ENCODE measurements at regions of chr17 and their contacts with region 1.

Region 1: DNA sequence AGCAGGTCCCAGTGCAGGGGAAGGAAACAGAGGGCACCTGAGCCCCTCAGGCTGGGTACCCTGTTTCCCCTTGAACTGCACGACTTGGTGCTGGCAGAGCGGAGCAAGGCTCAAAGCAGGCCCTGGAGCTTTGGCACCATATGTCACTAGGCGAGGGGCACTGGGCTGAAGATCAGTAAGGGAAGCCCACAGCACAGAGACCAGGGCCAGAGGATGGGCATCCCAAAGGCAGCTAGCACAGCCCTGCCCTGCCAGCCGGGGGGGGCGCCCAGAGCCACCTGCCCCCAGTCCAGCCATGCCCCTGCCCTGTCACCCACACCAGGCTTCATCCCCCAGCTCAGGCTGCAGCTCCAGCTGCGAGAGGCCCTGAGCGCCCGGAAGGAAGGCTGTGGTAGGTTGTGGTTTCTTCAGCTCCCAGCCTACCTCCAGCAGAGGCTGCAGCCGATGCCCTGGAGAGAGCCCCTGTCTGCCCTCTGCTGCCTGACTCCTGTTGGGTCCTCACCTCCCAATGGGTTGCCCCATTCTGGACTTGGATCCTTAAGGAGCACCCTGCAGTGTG is 10.9 kb downstream of the NHERF1 start:
- DNase-seq: peak; percentile 37 to 83 (median 52)
- ATAC-seq: peak; percentile 82
- H3K4me3 ChIP-seq: peak overlapping the region; percentile 35
- H3K4me3 Mint-ChIP-seq: peak overlapping the region; percentile 88
- H3K27ac ChIP-seq: peak overlapping the region; percentile 61 to 63
- H3K27ac Mint-ChIP-seq: peak overlapping the region; percentile 91
- H3K4me1 ChIP-seq: peaks cover 100% of the 10 kb centered on the region
- H3K4me1 Mint-ChIP-seq: peaks cover 70% of the 10 kb centered on the region
- H3K27me3 ChIP-seq: no peaks in the 10 kb centered on the region
- H3K27me3 Mint-ChIP-seq: no peaks in the 10 kb centered on the region
- CTCF ChIP-seq: peak; percentile 38

Region 2: DNA sequence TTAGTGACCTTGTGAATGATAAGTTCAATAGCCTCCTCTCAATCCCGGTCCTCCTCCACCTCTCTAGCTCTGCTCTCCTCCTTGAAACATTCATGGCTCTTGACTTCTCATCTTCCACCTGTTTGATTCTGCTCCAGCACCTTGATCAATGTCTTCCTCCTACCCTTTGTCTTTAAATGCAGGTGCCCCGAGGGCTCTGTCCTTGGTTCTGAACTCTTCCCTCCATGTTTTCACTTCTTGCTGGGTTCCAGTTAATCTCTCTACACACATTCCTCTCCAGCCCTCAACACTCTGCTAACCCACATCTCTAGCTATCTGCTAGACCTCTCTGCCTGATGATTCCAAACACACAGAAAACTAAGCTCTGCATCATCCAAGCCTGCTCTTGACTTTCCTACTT is 149.2 kb before region 1 on chr17:
- CTCF ChIA-PET with region 1: no interaction called
- POLR2A ChIA-PET with region 1: no interaction called
- intact Hi-C with region 1: no loop called
- DNase-seq: no peak
- ATAC-seq: no peak
- H3K4me3 ChIP-seq: no peak overlapping the region
- H3K4me3 Mint-ChIP-seq: no peak overlapping the region
- H3K27ac ChIP-seq: no peak overlapping the region
- H3K27ac Mint-ChIP-seq: no peak overlapping the region
- H3K4me1 ChIP-seq: peaks cover 8% of the 10 kb centered on the region
- H3K4me1 Mint-ChIP-seq: no peaks in the 10 kb centered on the region
- H3K27me3 ChIP-seq: peaks cover 15 to 24% of the 10 kb centered on the region in 2 experiments
- H3K27me3 Mint-ChIP-seq: peaks cover 13% of the 10 kb centered on the region
- CTCF ChIP-seq: no peak

Region 3: DNA sequence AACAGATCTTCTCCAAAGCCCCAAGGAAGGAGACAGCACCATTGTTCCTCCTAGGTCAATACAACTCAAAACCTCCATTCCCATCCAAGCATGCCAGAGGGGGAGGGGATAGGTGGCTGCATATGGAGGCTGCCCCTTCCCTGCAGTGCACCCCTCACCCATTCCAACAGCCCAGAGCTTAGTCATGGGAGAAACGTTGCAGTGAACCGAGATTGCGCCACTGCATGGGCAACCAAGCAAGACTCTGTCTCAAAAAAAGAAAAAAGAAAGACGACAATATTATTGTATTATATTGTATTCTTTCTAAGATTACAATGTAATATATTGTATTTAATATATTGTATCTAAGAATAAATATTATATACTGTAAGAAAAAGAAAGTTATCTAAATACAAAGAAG is 99.4 kb before region 1 on chr17:
- CTCF ChIA-PET with region 1: interaction called, 5 read pairs
- POLR2A ChIA-PET with region 1: interaction called, 12 read pairs
- intact Hi-C with region 1: no loop called
- DNase-seq: no peak
- ATAC-seq: no peak
- H3K4me3 ChIP-seq: no peak overlapping the region
- H3K4me3 Mint-ChIP-seq: no peak overlapping the region
- H3K27ac ChIP-seq: no peak overlapping the region
- H3K27ac Mint-ChIP-seq: no peak overlapping the region
- H3K4me1 ChIP-seq: peaks cover 6% of the 10 kb centered on the region
- H3K4me1 Mint-ChIP-seq: peaks cover 5% of the 10 kb centered on the region
- H3K27me3 ChIP-seq: peaks cover 5 to 12% of the 10 kb centered on the region in 2 experiments
- H3K27me3 Mint-ChIP-seq: peaks cover 52% of the 10 kb centered on the region
- CTCF ChIP-seq: no peak

Region 4: GRCh38 chr17:74742153-74742515 is 17.2 kb before region 1 on chr17:
- CTCF ChIA-PET with region 1: interaction called, 23 read pairs
- POLR2A ChIA-PET with region 1: interaction called, 90 read pairs
- intact Hi-C with region 1: no loop called
- DNase-seq: peak in 11 of 14 experiments; percentile 32 to 81 (median 62)
- ATAC-seq: peak; percentile 5
- H3K4me3 ChIP-seq: peak overlapping the region; percentile 32
- H3K4me3 Mint-ChIP-seq: peak overlapping the region; percentile 82
- H3K27ac ChIP-seq: peak overlapping the region; percentile 58 to 65
- H3K27ac Mint-ChIP-seq: peak overlapping the region; percentile 91
- H3K4me1 ChIP-seq: peaks cover 100% of the 10 kb centered on the region
- H3K4me1 Mint-ChIP-seq: peaks cover 86% of the 10 kb centered on the region
- H3K27me3 ChIP-seq: no peaks in the 10 kb centered on the region
- H3K27me3 Mint-ChIP-seq: no peaks in the 10 kb centered on the region
- CTCF ChIP-seq: no peak

Region 5: GRCh38 chr17:74748529-74749365 is 10.6 kb before region 1 on chr17 and contains the start of gene NHERF1:
- CTCF ChIA-PET with region 1: interaction called, 23 read pairs
- POLR2A ChIA-PET with region 1: interaction called, 90 read pairs
- intact Hi-C with region 1: loop called in 1 of 2 experiments (anchors 1 kb)
- DNase-seq: peak in 13 of 14 experiments; percentile 83 to 97 (median 94)
- ATAC-seq: peak; percentile 82
- H3K4me3 ChIP-seq: peak within 1 kb of the TSS; percentile 98
- H3K4me3 Mint-ChIP-seq: peak within 1 kb of the TSS; percentile 92
- H3K27ac ChIP-seq: peak within 1 kb of the TSS; percentile 48 to 84
- H3K27ac Mint-ChIP-seq: peak within 1 kb of the TSS; percentile 94
- H3K4me1 ChIP-seq: peaks cover 74% of the 10 kb centered on the region
- H3K4me1 Mint-ChIP-seq: peaks cover 74% of the 10 kb centered on the region
- H3K27me3 ChIP-seq: no peaks in the 10 kb centered on the region
- H3K27me3 Mint-ChIP-seq: no peaks in the 10 kb centered on the region
- CTCF ChIP-seq: no peak
- total RNA-seq, gene NHERF1: 68.4 to 72.4 TPM

Region 6: DNA sequence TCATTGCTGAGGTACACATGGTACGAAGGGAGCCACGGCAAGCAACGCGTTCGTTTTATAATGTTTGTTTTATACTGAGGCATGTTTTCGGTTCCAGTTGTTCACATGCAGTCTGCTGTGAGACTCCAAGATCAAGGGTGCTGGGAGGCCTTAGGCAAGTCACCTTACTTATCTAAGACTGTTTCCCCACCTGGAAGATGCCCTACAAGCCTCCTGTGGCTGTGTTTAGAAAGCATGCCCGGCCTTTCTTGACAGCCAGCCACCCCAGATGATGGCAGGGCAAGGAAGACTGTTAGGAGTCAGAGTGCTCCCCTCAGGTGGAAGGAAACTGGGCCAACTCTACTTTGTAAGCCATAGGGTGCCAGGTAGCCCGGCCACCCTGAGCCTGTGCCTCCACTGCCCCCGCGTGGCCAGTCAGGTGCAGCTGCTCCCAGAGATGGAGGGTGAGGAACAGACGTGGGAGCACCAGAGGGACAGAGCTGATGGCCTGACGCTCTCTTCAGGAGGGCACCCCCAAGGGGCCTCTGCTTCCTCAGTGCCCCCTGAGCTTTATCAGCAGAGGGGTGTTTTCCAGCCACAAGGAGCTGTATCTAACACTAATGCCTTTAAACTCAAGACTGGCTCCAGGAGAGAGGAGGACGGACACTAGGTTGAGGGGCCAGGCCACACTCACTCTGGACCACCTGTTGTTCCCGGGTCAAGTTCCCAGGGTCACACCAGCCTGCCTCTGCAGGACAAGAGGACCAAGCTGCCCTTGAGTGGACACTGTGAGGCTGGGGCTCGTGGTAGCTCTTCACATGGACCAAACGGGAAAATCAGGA is 11.4 kb after region 1 on chr17:
- CTCF ChIA-PET with region 1: interaction called, 11 read pairs
- POLR2A ChIA-PET with region 1: interaction called, 7 read pairs
- intact Hi-C with region 1: no loop called
- DNase-seq: peak; percentile 66 to 88 (median 78)
- ATAC-seq: peak; percentile 97
- H3K4me3 ChIP-seq: no peak overlapping the region
- H3K4me3 Mint-ChIP-seq: peak overlapping the region; percentile 54
- H3K27ac ChIP-seq: no peak overlapping the region
- H3K27ac Mint-ChIP-seq: peak overlapping the region; percentile 81
- H3K4me1 ChIP-seq: peaks cover 63% of the 10 kb centered on the region
- H3K4me1 Mint-ChIP-seq: peaks cover 34% of the 10 kb centered on the region
- H3K27me3 ChIP-seq: no peaks in the 10 kb centered on the region
- H3K27me3 Mint-ChIP-seq: no peaks in the 10 kb centered on the region
- CTCF ChIP-seq: peak; percentile 81